HEK293T (cell line): ENCODE measurements at regions of chr12 and their contacts with region 1.

Region 1: GRCh38 chr12:43776498-43776897 is 17.7 kb downstream of the IRAK4 start:
- DNase-seq: peak; percentile 39

Region 2: GRCh38 chr12:43676183-43676813 is 100.2 kb before region 1 on chr12:
- CTCF ChIA-PET with region 1: no interaction called
- POLR2A ChIA-PET with region 1: no interaction called
- DNase-seq: peak; percentile 59

Region 3: GRCh38 chr12:43742106-43742505 is 34.4 kb before region 1 on chr12:
- CTCF ChIA-PET with region 1: no interaction called
- POLR2A ChIA-PET with region 1: no interaction called
- DNase-seq: no peak

Region 4: DNA sequence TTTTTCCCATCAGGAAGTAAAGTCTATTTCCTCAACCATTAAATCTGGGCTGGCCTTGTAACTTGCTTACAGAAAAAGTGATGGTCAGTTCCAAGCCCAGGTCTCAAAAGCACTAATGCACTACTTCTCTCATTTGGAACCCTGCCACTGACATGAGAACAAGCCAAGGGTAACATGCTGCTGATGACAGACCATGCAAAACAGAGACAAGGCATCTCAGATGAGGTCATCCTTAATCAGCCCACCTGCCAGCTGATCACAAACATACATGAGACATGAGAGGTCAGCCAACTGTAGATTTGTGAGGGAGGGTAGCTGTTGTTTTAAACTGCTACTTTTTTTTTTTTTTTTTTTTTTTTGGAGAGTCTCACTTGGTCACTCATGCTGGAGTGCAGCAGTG is 13.4 kb after region 1 on chr12:
- CTCF ChIA-PET with region 1: no interaction called
- POLR2A ChIA-PET with region 1: no interaction called
- DNase-seq: no peak

Region 5: DNA sequence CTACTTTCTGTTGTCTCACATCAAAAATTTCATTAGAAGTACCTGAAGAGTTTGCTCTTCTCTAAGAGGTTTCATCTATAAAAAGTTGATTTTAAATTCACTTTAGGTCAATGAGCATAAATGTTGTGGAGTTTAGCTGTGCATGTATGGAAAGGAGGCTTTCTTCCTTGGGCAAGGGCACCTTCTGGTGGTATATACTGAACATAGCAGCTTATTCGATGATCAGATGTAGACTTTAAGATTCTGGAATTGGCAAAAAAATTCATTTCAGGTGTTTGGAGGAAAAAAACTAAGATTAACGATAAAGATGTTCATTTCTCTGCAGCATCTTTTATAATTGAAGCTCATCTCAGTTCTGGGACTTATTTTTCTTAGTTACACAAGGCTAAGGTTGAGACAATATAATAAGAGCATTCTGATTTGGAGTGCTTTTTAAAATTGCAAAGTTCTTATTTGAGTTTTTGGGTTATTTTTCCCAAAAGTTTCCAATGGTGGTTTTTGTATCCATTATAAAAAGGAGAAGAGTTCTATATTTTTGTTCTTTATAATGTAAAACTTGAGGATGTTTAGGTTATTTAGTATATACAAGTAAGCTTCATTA is 106.2 kb after region 1 on chr12:
- CTCF ChIA-PET with region 1: interaction called, 43 read pairs
- POLR2A ChIA-PET with region 1: interaction called, 5 read pairs
- DNase-seq: peak; percentile 46